Lower leg skin (tissue), 4 donors: ENCODE measurements at regions of chr10 and their contacts with region 1.

Region 1: DNA sequence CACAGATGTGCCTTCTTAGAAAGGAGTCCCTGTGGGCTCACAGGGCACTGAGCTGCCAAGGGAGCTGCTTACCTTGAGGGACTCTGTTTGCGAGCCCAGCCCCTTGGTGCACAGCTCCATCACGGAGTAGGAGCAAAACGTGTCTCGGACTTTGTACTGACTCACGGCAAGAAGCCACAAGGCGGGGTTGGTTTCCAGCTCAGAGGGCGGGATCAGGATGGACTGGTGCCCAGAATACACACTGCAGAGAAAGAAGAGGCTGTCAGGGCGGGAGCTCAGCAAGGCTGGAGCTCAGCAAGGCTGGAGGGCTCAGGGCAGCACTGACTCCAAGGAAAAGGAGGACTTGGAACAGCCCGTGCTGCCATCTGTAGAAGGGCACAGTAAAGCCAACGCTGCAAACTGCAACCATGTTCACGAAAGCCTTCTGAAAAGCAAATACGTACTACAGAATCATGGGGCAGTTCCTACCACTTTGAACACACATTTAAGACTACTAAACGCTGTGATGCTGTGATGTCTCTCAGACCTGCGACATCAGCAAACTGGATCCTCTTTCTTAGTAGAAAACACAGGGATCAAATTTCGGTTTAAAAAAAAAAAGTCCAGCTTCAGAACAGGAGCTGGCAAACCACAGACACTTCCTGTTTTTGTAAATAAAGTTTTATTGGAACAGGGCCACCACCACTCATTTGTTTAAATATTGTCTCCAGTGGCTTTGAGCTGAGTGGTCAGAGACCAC is 194.3 kb downstream of the ZMYND11 start:
- DNase-seq: peak; percentile 88 to 96
- H3K4me3 ChIP-seq: no peak overlapping the region
- CTCF ChIP-seq: no peak
- POLR2A ChIP-seq: no peak

Region 2: GRCh38 chr10:824946-825345 is 495.4 kb after region 1 on chr10:
- intact Hi-C with region 1: loop called (anchors 5 kb)
- DNase-seq: peak in 1 of 2 donors; percentile 26
- H3K4me3 ChIP-seq: no peak overlapping the region
- CTCF ChIP-seq: no peak
- POLR2A ChIP-seq: no peak